BJ (cell line): ENCODE measurements at regions of chr14 and their contacts with region 1.

Region 1: DNA sequence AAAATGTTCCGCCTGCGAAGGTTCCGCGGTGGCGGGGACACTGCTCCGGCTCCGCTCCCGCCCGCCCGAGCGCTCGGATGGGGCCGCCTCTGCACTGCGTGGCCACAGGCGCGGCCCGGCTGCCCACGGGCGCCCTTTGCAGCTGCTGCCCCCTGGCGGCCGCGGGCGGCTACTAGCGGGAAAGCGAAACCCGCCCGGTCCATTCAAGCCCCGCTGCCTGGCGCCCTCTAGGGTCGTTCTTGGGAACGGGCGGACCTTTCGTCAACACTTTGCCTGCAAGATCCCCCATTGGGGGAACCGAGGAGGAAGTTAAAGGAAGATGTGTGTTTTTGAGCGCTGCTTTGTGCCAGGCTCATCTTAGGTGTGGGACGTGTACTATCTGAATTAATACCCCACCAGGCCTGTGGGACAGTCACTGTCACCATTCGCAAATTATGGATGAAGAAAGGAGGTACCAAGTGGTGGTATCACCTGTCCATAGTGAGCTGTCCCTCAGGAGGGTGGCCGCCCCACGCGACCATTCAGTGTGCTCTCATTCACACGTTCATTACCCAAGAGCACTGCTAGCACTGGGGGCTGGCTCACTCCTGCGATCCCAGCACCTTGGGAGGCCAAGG is 19.4 kb downstream of the GPR132 start:
- DNase-seq: no peak
- H3K4me3 ChIP-seq: no peak overlapping the region
- H3K27me3 ChIP-seq: peaks cover 2% of the 10 kb centered on the region; the same call in 1 of the 2 replicates
- CTCF ChIP-seq: peak; percentile 97

Region 2: DNA sequence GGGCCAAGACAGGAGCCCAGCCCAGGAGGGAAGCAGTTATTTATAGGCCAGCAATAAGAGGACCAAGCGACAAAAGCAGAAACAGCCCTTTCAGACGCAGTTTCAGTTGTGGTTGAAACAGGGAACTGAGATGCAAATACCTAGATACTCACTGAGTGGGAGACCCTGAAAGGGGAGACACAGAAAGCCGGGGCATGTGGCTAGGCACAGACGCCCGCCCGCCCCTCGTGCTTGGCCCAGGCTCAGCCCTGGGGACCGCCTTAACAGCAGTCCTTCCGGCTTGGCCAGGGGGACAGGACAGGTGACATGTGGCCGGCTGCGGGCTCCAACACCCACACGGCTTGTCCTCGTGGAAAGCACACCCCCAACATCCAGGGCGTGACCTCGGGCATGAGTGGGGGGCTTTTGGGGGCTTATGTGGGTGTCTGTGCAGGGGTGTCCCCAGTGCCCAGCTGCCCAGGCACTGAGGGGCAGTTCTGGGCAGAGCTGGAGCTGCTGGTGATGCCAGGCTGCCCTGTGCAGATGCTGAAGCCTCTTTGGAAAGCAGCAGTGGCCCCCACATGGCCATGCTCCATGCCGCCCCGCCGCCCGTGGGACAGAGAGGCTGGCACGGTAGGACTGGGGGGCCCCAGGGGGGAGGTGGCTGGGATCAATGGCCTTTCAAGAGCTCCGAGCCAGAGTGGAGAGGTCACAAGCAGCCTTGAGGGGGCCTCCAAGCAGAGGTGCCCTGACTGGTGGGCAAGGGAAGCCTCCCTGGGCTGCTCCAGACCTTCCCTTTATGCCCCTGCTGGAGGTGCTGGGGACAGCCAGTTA is 119.0 kb before region 1 on chr14:
- CTCF ChIA-PET with region 1: interaction called, 10 read pairs
- POLR2A ChIA-PET with region 1: no interaction called
- DNase-seq: no peak
- H3K4me3 ChIP-seq: no peak overlapping the region
- H3K27me3 ChIP-seq: 0 out of 2 replicates have a peak, but pooled peaks cover 2% of the 10 kb centered on the region
- CTCF ChIP-seq: no peak

Region 3: GRCh38 chr14:104976198-104977007 is 69.4 kb before region 1 on chr14:
- CTCF ChIA-PET with region 1: interaction called, 159 read pairs
- POLR2A ChIA-PET with region 1: no interaction called
- DNase-seq: no peak
- H3K4me3 ChIP-seq: no peak overlapping the region
- H3K27me3 ChIP-seq: no peaks in the 10 kb centered on the region
- CTCF ChIP-seq: peak; percentile 95

Region 4: GRCh38 chr14:104998801-104999200 is 47.0 kb before region 1 on chr14:
- CTCF ChIA-PET with region 1: no interaction called
- POLR2A ChIA-PET with region 1: no interaction called
- DNase-seq: no peak
- H3K4me3 ChIP-seq: no peak overlapping the region
- H3K27me3 ChIP-seq: no peaks in the 10 kb centered on the region
- CTCF ChIP-seq: no peak

Region 5: DNA sequence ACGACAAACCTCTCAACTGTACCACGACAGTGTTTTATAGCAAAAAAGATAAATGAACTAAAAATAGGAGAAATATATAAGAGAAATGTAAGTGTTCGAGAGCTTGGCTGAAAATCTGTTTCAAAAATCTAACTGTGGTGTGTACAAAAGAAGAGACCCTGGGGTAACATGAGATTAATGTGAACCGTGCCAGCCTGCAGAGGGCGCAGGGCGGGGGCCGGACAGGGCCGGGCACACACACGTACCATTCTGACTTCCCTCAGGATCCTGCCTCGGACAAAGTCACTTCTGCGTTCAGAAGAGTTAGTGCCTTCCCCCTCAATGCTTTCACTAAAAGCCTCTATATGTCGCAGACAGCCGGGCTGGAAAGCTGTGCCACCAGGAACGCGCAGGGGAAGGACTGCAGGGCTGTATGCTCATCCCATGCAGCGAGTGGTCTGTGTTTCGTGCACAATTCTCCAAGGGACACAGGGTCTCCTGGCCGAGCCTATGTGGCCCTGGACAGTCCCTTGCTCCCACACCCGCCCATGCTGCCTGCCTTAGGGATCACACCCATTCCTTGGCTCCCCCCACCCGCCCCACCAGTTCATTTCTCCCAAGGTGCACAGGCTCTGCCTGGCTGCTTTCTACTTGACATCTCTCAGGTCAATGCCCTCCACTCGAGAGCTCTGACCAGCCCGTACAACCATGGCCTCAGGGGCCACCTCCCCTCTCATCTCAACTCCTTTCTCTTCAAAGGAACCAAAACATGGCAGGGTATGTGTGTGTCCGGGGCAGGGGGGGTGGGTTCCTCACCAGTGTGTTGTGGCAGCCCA is 33.4 kb before region 1 on chr14:
- CTCF ChIA-PET with region 1: interaction called, 13 read pairs
- POLR2A ChIA-PET with region 1: no interaction called
- DNase-seq: no peak
- H3K4me3 ChIP-seq: no peak overlapping the region
- H3K27me3 ChIP-seq: no peaks in the 10 kb centered on the region
- CTCF ChIP-seq: peak; percentile 39; the same call in 1 of the 2 replicates

Region 6: GRCh38 chr14:105086833-105087307 is 41.1 kb after region 1 on chr14:
- CTCF ChIA-PET with region 1: interaction called, 13 read pairs
- POLR2A ChIA-PET with region 1: no interaction called
- DNase-seq: no peak
- H3K4me3 ChIP-seq: peak overlapping the region; percentile 63
- H3K27me3 ChIP-seq: no peaks in the 10 kb centered on the region; the same call in 1 of the 2 replicates
- CTCF ChIP-seq: peak; percentile 49

Region 7: GRCh38 chr14:105138021-105138541 is 92.3 kb after region 1 on chr14:
- CTCF ChIA-PET with region 1: no interaction called
- POLR2A ChIA-PET with region 1: no interaction called
- DNase-seq: no peak
- H3K4me3 ChIP-seq: no peak overlapping the region
- H3K27me3 ChIP-seq: no peaks in the 10 kb centered on the region; the same call in none of the 2 replicates
- CTCF ChIP-seq: no peak